AG04450 (cell line): ENCODE measurements at regions of chr1 and their contacts with region 1.

Region 1: DNA sequence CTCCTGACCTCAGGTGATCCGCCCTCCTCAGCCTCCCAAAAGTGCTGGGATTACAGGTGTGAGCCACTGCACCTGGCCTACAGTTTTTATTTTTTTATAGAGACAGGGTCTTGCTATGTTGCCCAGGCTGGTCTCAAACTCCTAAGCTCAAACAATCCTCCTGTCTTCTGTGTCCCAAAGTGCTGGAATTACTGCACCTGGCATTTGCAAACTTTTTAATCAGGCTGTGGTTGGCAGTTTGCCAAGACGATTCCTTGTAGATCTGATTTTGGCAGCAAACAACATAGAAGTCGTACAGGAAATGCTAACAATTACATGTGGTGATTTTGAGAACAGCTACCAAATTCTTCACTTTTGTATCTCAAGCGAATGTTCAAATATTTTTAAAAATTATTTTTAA is 10.1 kb downstream of the RBP7 start:
- DNase-seq: no peak
- H3K4me3 ChIP-seq: no peak overlapping the region
- H3K27ac ChIP-seq: no peak overlapping the region
- H3K27me3 ChIP-seq: no peaks in the 10 kb centered on the region
- CTCF ChIP-seq: no peak

Region 2: DNA sequence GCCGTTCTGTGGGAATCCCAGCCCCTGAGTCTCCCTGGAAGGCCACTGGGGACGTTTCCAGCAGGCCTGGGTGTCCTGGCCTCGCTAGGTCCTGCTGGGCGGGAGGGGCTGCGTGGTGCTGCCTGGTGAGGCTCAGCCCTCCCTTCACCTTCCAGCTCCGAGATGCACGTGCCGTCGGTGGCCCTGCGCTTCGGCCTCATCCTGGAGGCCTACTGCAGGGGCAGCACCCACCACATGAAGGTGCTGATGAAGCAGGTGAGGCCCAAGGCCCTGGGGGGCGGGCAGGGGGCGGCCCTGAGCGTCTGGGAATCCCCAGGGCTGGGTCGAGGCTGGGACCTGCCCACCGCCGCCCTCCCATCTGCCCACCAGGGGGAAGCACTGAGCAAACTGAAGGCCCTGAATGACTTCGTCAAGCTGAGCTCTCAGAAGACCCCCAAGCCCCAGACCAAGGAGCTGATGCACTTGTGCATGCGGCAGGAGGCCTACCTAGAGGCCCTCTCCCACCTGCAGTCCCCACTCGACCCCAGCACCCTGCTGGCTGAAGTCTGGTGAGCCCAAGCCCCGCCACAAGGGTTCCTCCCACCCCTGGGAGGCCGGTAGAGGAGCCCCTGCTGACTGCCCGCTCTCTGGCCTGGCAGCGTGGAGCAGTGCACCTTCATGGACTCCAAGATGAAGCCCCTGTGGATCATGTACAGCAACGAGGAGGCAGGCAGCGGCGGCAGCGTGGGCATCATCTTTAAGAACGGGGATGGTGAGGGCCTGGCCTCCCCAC is 285.4 kb before region 1 on chr1:
- CTCF ChIA-PET with region 1: no interaction called
- POLR2A ChIA-PET with region 1: interaction called, 10 read pairs
- DNase-seq: no peak
- H3K4me3 ChIP-seq: no peak overlapping the region
- H3K27ac ChIP-seq: no peak overlapping the region
- H3K27me3 ChIP-seq: no peaks in the 10 kb centered on the region
- CTCF ChIP-seq: peak; percentile 54

Region 3: DNA sequence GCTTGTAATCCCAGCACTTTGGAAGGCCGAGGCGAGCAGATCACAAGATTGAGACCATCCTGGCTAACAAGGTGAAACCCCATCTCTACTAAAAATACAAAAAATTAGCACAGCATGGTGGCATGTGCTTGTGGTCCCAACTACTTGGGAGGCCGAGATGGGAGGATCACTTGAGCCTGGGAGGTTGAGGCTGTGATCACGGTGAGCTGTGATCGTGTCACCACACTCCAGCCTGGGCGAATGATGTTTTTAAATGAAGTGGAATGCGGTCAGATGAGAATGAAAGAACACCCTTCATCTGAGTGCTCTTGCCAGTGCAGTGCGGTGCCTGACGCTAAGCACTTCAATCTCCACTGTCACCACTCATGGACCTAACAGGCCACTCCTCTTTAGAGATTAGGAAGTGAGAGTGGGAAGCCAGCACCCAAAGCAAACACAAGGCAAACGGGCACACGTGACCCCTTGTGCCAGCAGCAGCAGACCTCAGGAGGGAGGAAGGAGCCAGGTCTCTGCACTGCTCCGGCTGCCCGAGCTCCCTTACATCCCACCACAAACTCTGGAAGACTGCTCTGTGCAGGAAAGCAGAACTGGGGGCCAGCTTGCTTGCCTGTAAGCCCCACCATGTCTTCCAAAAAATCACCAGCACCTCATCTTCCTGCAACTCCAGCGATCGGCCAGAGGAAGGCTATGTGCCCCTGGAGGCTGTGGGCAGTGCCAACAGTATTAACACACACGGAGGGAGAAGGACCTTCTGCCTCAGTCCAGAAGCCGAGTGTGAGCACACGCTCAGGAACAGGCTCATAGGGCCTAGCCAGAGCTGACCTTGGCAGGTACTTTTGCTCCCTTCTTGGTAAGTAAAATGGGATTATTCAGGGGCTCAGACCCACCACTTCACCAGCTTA is 106.8 kb before region 1 on chr1:
- CTCF ChIA-PET with region 1: no interaction called
- POLR2A ChIA-PET with region 1: interaction called, 16 read pairs
- DNase-seq: no peak
- H3K4me3 ChIP-seq: no peak overlapping the region
- H3K27ac ChIP-seq: no peak overlapping the region
- H3K27me3 ChIP-seq: no peaks in the 10 kb centered on the region
- CTCF ChIP-seq: no peak

Region 4: DNA sequence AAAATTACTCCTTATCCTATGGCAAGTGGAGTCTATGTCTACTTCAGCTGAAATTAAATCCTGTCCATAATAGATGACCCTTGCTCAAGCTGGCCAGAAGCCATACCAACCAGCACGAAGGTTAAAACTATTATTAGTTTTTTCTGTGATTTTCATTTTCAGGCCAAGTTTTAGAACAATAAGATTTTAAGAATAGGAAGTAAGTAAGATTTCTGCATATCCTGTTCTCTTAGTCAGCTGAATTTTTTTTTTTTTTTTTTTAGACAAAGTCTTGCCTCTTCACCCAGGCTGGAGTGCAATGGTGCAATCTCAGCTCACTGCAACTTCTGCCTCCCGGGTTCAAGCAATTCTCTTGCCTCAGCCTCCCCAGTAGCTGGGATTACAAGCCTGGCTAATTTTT is 16.2 kb before region 1 on chr1:
- CTCF ChIA-PET with region 1: no interaction called
- POLR2A ChIA-PET with region 1: interaction called, 12 read pairs
- DNase-seq: no peak
- H3K4me3 ChIP-seq: no peak overlapping the region
- H3K27ac ChIP-seq: no peak overlapping the region
- H3K27me3 ChIP-seq: peaks cover 3% of the 10 kb centered on the region
- CTCF ChIP-seq: no peak

Region 5: DNA sequence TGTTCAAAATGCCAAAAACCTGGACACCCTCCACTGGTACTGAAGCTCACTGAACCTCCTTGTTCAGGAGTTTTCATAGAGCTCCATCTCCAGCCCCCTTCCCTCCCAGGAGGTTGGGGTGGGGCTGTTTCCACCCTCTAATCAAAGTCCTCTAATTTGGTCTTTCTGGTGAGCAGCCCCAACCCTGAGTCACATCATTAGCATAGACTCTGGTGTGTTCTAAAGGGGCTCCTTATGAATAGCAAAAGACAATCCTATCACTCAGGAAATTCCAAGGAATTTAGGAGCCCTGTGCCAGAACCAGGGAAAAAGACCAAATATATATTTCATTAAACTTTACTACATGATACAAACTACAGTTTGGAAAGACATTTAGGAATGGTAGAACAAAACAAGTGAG is 12.4 kb after region 1 on chr1:
- CTCF ChIA-PET with region 1: no interaction called
- POLR2A ChIA-PET with region 1: interaction called, 10 read pairs
- DNase-seq: no peak
- H3K4me3 ChIP-seq: no peak overlapping the region
- H3K27ac ChIP-seq: no peak overlapping the region
- H3K27me3 ChIP-seq: no peaks in the 10 kb centered on the region
- CTCF ChIP-seq: no peak

Region 6: DNA sequence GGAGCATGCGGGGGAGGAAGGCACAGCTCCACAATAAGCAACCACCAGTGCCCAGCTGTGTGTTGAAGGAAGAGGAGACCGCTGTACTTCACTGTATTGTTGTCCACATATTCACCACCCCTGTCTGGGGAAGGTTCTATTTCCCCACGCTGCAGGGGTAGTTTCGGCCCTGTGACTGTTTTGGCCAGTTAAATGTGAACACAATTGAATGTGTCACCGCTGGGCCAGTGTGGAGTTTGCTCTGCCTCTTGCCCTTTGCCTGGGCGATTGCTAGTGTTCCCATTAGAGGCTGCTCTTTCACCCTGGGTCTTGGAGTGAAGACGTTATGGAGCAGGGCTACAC is 58.1 kb after region 1 on chr1:
- CTCF ChIA-PET with region 1: no interaction called
- POLR2A ChIA-PET with region 1: no interaction called
- DNase-seq: no peak
- H3K4me3 ChIP-seq: no peak overlapping the region; the same call in 1 of the 2 replicates
- H3K27ac ChIP-seq: peak overlapping the region; percentile 61
- H3K27me3 ChIP-seq: no peaks in the 10 kb centered on the region
- CTCF ChIP-seq: no peak